B cell (primary cell): ENCODE measurements at regions of chr7 and their contacts with region 1.

Region 1: GRCh38 chr7:21300692-21301091 is 127.2 kb upstream of the SP4 start:
- DNase-seq: peak; percentile 14
- ATAC-seq: no peak
- H3K4me3 ChIP-seq: no peak overlapping the region
- H3K4me3 Mint-ChIP-seq: no peak overlapping the region
- H3K27ac ChIP-seq: no peak overlapping the region
- H3K27ac Mint-ChIP-seq: no peak overlapping the region
- H3K4me1 ChIP-seq: no peaks in the 10 kb centered on the region
- H3K4me1 Mint-ChIP-seq: peaks cover 4% of the 10 kb centered on the region
- H3K27me3 ChIP-seq: no peaks in the 10 kb centered on the region
- H3K27me3 Mint-ChIP-seq: no peaks in the 10 kb centered on the region
- CTCF ChIP-seq: peak; percentile 38

Region 2: GRCh38 chr7:21198921-21199320 is 101.8 kb before region 1 on chr7:
- CTCF ChIA-PET with region 1: no interaction called
- POLR2A ChIA-PET with region 1: no interaction called
- intact Hi-C with region 1: no loop called
- DNase-seq: no peak
- ATAC-seq: no peak
- H3K4me3 ChIP-seq: no peak overlapping the region
- H3K4me3 Mint-ChIP-seq: no peak overlapping the region
- H3K27ac ChIP-seq: no peak overlapping the region
- H3K27ac Mint-ChIP-seq: no peak overlapping the region
- H3K4me1 ChIP-seq: no peaks in the 10 kb centered on the region
- H3K4me1 Mint-ChIP-seq: no peaks in the 10 kb centered on the region
- H3K27me3 ChIP-seq: no peaks in the 10 kb centered on the region
- H3K27me3 Mint-ChIP-seq: peaks cover 6% of the 10 kb centered on the region
- CTCF ChIP-seq: no peak

Region 3: GRCh38 chr7:21526007-21526406 is 225.3 kb after region 1 on chr7:
- CTCF ChIA-PET with region 1: no interaction called
- POLR2A ChIA-PET with region 1: no interaction called
- intact Hi-C with region 1: loop called (anchors 5 kb)
- DNase-seq: peak; percentile 11
- ATAC-seq: no peak
- H3K4me3 ChIP-seq: no peak overlapping the region
- H3K4me3 Mint-ChIP-seq: no peak overlapping the region
- H3K27ac ChIP-seq: no peak overlapping the region
- H3K27ac Mint-ChIP-seq: no peak overlapping the region
- H3K4me1 ChIP-seq: no peaks in the 10 kb centered on the region
- H3K4me1 Mint-ChIP-seq: no peaks in the 10 kb centered on the region
- H3K27me3 ChIP-seq: no peaks in the 10 kb centered on the region
- H3K27me3 Mint-ChIP-seq: no peaks in the 10 kb centered on the region
- CTCF ChIP-seq: peak; percentile 38